Aorta (tissue), 5 donors: ENCODE measurements at regions of chr22 and their contacts with region 1.

Region 1: GRCh38 chr22:46013460-46014416 is 36.8 kb upstream of the WNT7B start:
- DNase-seq: peak; percentile 98 to 99
- ATAC-seq: peak; percentile 96
- H3K4me3 ChIP-seq: peak overlapping the region in 1 of 2 donors; percentile 46
- H3K27ac ChIP-seq: peak overlapping the region; percentile 90 to 97
- H3K4me1 ChIP-seq: no peaks in the 10 kb centered on the region
- H3K27me3 ChIP-seq: no peaks in the 10 kb centered on the region

Region 2: GRCh38 chr22:46071451-46072109 is 57.8 kb after region 1 on chr22:
- intact Hi-C with region 1: loop called (anchors 5 kb)
- DNase-seq: peak; percentile 95
- ATAC-seq: peak; percentile 48
- H3K4me3 ChIP-seq: peak overlapping the region; percentile 63 to 95
- H3K27ac ChIP-seq: peak overlapping the region; percentile 95 to 98
- H3K4me1 ChIP-seq: peaks cover 0 to 3% of the 10 kb centered on the region in 2 donors
- H3K27me3 ChIP-seq: no peaks in the 10 kb centered on the region